OCI-LY7 (cell line): ENCODE measurements at regions of chr10 and their contacts with region 1.

Region 1: DNA sequence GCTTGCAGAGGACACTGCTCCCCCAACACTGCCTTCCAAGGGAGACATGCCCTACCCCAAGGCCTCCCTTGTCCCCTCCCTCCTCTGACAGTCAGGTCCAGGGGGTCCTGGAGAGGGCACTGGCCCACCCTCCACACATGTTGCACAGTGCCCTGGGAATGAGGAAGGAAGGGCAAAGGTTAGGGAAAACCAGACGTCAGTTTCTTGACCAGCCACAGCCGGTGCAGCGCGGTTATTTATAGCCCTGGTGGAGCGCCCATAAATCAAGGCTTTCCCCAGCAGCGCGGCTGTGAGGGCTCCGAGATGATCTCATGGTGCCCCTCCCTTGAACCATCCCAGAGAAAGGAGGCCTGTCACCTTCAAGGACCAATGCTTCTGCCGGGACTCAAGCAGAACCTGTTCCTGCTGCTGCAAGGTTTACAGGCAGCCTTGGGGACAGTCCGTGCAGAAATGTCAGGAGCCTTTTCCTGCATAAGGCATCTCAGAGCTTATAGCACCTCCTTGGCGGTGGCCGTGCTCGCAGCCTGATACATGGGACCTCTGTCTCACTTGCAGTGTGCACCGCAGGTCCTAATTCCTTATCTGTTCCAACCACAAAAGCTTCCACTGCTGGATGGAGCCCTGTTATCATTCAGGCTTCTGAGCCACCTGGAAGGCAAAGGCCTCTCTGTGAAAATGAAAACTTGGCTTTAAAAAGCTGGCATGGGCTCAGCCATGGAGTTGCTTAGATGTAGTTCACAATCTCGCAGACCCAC is 127.3 kb downstream of the LHPP start:
- DNase-seq: no peak
- H3K4me3 ChIP-seq: no peak overlapping the region
- H3K27ac ChIP-seq: no peak overlapping the region
- H3K4me1 ChIP-seq: peaks cover 8% of the 10 kb centered on the region
- CTCF ChIP-seq: no peak

Region 2: GRCh38 chr10:122931088-122931958 is 1657.6 kb before region 1 on chr10:
- CTCF ChIA-PET with region 1: interaction called, 10 read pairs
- POLR2A ChIA-PET with region 1: no interaction called
- intact Hi-C with region 1: no loop called
- DNase-seq: no peak
- H3K4me3 ChIP-seq: no peak overlapping the region
- H3K27ac ChIP-seq: no peak overlapping the region
- H3K4me1 ChIP-seq: no peaks in the 10 kb centered on the region
- CTCF ChIP-seq: no peak

Region 3: DNA sequence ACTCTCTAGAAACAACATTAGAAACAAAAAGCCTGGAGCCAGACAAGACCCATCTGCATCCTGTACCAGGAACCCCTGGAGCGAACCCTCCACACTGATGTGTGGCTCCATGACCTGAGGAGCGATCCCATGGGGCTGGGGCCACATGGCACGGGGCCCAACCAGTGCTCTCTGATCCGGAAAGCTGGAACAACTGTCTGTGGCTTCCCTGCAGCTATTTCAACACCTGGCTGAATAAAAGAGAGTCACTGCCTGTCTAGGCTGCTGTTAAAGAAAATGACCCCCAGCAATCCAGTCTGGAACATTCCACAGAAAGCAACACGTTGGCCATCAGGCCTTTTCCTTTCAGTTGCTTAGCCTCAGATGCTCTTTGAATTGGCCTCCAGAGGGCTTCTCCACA is 1213.2 kb after region 1 on chr10:
- CTCF ChIA-PET with region 1: no interaction called
- POLR2A ChIA-PET with region 1: interaction called, 10 read pairs
- intact Hi-C with region 1: no loop called
- DNase-seq: no peak
- H3K4me3 ChIP-seq: no peak overlapping the region
- H3K27ac ChIP-seq: no peak overlapping the region
- H3K4me1 ChIP-seq: peaks cover 17% of the 10 kb centered on the region
- CTCF ChIP-seq: no peak